HepG2 (cell line): ENCODE measurements at regions of chr19 and their contacts with region 1.

Region 1: GRCh38 chr19:56333505-56333904 is 18.9 kb upstream of the ZSCAN5A start:
- DNase-seq: peak; percentile 67
- ATAC-seq: peak; percentile 69
- H3K4me3 ChIP-seq: no peak overlapping the region
- H3K27ac ChIP-seq: no peak overlapping the region
- H3K4me1 ChIP-seq: no peaks in the 10 kb centered on the region; the same call in 1 of the 2 replicates
- H3K27me3 ChIP-seq: no peaks in the 10 kb centered on the region
- CTCF ChIP-seq: peak; percentile 83
- EP300 ChIP-seq: no peak
- POLR2A ChIP-seq: no peak
- RAD21 ChIP-seq: peak; percentile 78

Region 2: GRCh38 chr19:56066152-56067023 is 267.1 kb before region 1 on chr19:
- CTCF ChIA-PET with region 1: interaction called, 14 read pairs
- POLR2A ChIA-PET with region 1: no interaction called
- in situ Hi-C with region 1: no loop called
- intact Hi-C with region 1: no loop called
- DNase-seq: peak; percentile 39
- ATAC-seq: peak; percentile 93
- H3K4me3 ChIP-seq: peak overlapping the region in 1 of 3 experiments; percentile 15; a peak in 1 of 6 replicates
- H3K27ac ChIP-seq: no peak overlapping the region
- H3K4me1 ChIP-seq: peaks cover 4% of the 10 kb centered on the region; the same call in 1 of the 2 replicates
- H3K27me3 ChIP-seq: peaks cover 0 to 19% of the 10 kb centered on the region in 2 experiments; a peak in 3 of 5 replicates
- CTCF ChIP-seq: peak; percentile 95
- EP300 ChIP-seq: no peak
- POLR2A ChIP-seq: no peak
- RAD21 ChIP-seq: peak; percentile 77

Region 3: DNA sequence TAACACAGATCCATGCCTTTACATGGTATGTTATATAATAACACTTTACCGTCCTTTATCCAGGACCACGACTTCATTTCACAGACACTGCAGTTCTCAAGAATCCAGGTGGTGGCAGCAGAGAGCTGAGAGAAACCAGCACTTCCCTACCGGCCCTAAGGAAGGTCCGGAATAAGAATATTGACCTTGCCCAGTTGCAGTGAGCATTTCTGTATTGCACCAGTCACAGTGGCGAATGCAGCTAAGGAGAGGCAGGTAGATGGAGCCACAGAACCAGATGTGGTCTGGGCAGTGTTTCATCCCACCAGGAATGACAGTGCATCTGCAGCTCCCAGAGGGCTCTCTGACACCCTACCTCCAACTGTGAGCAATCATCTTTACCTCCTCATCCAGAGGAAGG is 257.0 kb before region 1 on chr19:
- CTCF ChIA-PET with region 1: interaction called, 15 read pairs
- POLR2A ChIA-PET with region 1: interaction called, 4 read pairs
- in situ Hi-C with region 1: no loop called
- intact Hi-C with region 1: loop called (anchors 1 kb)
- DNase-seq: peak; percentile 48
- ATAC-seq: peak; percentile 49
- H3K4me3 ChIP-seq: no peak overlapping the region
- H3K27ac ChIP-seq: no peak overlapping the region
- H3K4me1 ChIP-seq: peaks cover 20% of the 10 kb centered on the region
- H3K27me3 ChIP-seq: no peaks in the 10 kb centered on the region; a peak in 1 of 5 replicates
- CTCF ChIP-seq: peak; percentile 87
- EP300 ChIP-seq: no peak
- POLR2A ChIP-seq: no peak
- RAD21 ChIP-seq: peak; percentile 63

Region 4: GRCh38 chr19:56252699-56253422 is 80.6 kb before region 1 on chr19:
- CTCF ChIA-PET with region 1: interaction called, 46 read pairs
- POLR2A ChIA-PET with region 1: interaction called, 7 read pairs
- in situ Hi-C with region 1: loop called (anchors 5 kb)
- intact Hi-C with region 1: loop called (anchors 1 kb)
- DNase-seq: peak; percentile 35
- ATAC-seq: peak; percentile 64
- H3K4me3 ChIP-seq: no peak overlapping the region
- H3K27ac ChIP-seq: no peak overlapping the region
- H3K4me1 ChIP-seq: no peaks in the 10 kb centered on the region
- H3K27me3 ChIP-seq: no peaks in the 10 kb centered on the region
- CTCF ChIP-seq: peak; percentile 76
- EP300 ChIP-seq: no peak
- POLR2A ChIP-seq: no peak
- RAD21 ChIP-seq: 0 out of 2 replicates have a peak, but pooled peaks have one; percentile 32

Region 5: GRCh38 chr19:56314562-56315077 is 18.9 kb before region 1 on chr19 and contains the start of gene ZSCAN5A:
- CTCF ChIA-PET with region 1: interaction called, 26 read pairs
- POLR2A ChIA-PET with region 1: interaction called, 4 read pairs
- in situ Hi-C with region 1: no loop called
- intact Hi-C with region 1: no loop called
- DNase-seq: peak; percentile 89
- ATAC-seq: peak; percentile 88
- H3K4me3 ChIP-seq: peak within 1 kb of the TSS; percentile 81 to 87 (median 82)
- H3K27ac ChIP-seq: peak within 1 kb of the TSS; percentile 96
- H3K4me1 ChIP-seq: peaks cover 44% of the 10 kb centered on the region
- H3K27me3 ChIP-seq: no peaks in the 10 kb centered on the region; a peak in 1 of 5 replicates
- CTCF ChIP-seq: no peak
- EP300 ChIP-seq: peak in 1 of 2 experiments; percentile 8; a peak in 1 of 4 replicates
- POLR2A ChIP-seq: peak; percentile 50 to 65
- RAD21 ChIP-seq: 0 out of 2 replicates have a peak, but pooled peaks have one; percentile 17
- total RNA-seq, gene ZSCAN5A: 17.8 and 23.7 TPM in 2 replicates